ENCODE measurements at regions of chr15 and their contacts with region 1.

Region 1: GRCh38 chr15:89893696-89894455 is at the start of gene AP3S2:
- DNase-seq: peak; percentile 96
- H3K4me3 Mint-ChIP-seq: peak within 1 kb of the TSS; percentile 99
- H3K27ac Mint-ChIP-seq: peak within 1 kb of the TSS; percentile 98
- H3K4me1 Mint-ChIP-seq: peaks cover 8% of the 10 kb centered on the region
- H3K27me3 Mint-ChIP-seq: no peaks in the 10 kb centered on the region
- CTCF ChIP-seq: no peak
- total RNA-seq, gene AP3S2: 46.2 and 51.9 TPM in 2 replicates

Region 2: GRCh38 chr15:89485855-89486361 is 408.0 kb before region 1 on chr15:
- CTCF ChIA-PET with region 1: no interaction called
- intact Hi-C with region 1: no loop called
- DNase-seq: peak; percentile 60
- H3K4me3 Mint-ChIP-seq: peak overlapping the region; percentile 55
- H3K27ac Mint-ChIP-seq: peak overlapping the region; percentile 27
- H3K4me1 Mint-ChIP-seq: peaks cover 17% of the 10 kb centered on the region
- H3K27me3 Mint-ChIP-seq: peaks cover 57% of the 10 kb centered on the region
- CTCF ChIP-seq: no peak

Region 3: DNA sequence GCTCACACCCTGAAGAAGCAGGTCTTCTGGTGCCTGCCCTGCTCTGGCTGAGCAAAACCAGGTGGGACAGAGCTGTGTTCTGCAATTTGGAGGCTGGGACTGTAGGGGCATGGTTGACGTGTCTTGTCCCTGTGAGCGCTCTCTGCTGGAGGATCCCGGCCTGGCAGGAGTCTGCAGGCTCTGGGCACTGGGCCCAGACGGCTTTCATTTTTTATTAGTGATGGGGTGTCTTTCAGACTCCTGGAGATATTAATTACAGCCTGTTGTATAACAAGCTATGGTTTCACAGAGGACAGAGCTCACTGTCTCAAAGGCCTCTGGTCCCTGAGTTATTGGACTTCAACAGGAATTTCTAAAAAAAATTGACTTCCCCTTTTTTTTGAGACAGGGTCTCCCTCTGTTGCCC is 77.7 kb after region 1 on chr15:
- CTCF ChIA-PET with region 1: interaction called, 10 read pairs
- intact Hi-C with region 1: loop called (anchors 1 kb)
- DNase-seq: peak; percentile 82
- H3K4me3 Mint-ChIP-seq: no peak overlapping the region
- H3K27ac Mint-ChIP-seq: no peak overlapping the region
- H3K4me1 Mint-ChIP-seq: no peaks in the 10 kb centered on the region
- H3K27me3 Mint-ChIP-seq: peaks cover 43% of the 10 kb centered on the region
- CTCF ChIP-seq: peak; percentile 66

Region 4: DNA sequence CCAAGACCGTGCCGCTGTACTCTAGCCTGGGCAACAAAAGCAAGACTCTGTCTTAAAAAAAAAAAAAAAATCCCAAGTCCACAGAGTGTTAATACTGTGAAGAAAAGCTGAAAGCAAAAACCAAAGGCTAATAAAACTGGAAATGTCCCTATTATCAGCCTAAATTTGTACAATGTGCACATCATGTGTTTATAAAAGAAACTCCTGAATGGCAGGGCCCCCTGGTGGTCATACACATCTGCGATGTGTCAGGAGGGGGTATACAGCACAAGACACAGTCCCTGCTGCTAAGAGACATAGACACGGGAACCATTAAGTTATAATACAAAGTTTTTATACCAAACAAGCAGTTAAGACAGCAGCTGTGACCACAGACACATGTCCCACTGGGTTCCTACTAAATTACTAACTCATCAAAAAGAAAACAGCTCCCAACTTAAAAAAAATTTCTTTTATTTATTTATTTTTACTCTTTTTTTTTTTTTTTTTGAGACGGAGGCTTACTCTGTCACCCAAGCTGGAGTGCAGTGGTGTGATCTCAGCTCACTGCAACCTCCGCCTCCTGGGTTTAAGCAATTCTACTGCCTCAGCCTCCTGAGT is 177.4 kb after region 1 on chr15:
- CTCF ChIA-PET with region 1: interaction called, 13 read pairs
- intact Hi-C with region 1: loop called (anchors 1 kb)
- DNase-seq: peak; percentile 86
- H3K4me3 Mint-ChIP-seq: no peak overlapping the region
- H3K27ac Mint-ChIP-seq: no peak overlapping the region
- H3K4me1 Mint-ChIP-seq: no peaks in the 10 kb centered on the region
- H3K27me3 Mint-ChIP-seq: no peaks in the 10 kb centered on the region
- CTCF ChIP-seq: peak; percentile 77

Region 5: DNA sequence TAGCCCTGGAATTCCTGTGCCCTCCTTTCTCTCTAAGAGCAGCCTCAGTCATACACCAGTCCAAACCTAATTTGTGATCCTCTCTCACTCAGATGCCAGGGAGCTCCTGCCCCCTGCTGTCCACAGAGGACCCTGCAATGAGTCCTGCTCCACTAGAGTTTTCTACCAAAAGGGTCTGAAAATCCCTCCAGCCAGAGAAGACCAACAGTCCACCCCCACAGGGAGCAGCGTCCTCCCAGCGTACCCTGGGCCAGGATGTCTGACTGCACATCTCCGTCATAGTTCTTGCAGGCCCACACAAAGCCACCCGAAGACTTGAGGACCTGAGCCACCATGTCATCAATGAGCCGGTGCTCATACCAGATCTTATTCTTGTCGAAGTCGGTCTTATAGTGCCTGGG is 193.0 kb after region 1 on chr15:
- CTCF ChIA-PET with region 1: interaction called, 17 read pairs
- intact Hi-C with region 1: loop called (anchors 1 kb)
- DNase-seq: peak; percentile 72
- H3K4me3 Mint-ChIP-seq: no peak overlapping the region
- H3K27ac Mint-ChIP-seq: no peak overlapping the region
- H3K4me1 Mint-ChIP-seq: no peaks in the 10 kb centered on the region
- H3K27me3 Mint-ChIP-seq: no peaks in the 10 kb centered on the region
- CTCF ChIP-seq: peak; percentile 74

Region 6: GRCh38 chr15:90286678-90287077 is 392.8 kb after region 1 on chr15:
- CTCF ChIA-PET with region 1: no interaction called
- intact Hi-C with region 1: no loop called
- DNase-seq: peak; percentile 30
- H3K4me3 Mint-ChIP-seq: no peak overlapping the region
- H3K27ac Mint-ChIP-seq: no peak overlapping the region
- H3K4me1 Mint-ChIP-seq: no peaks in the 10 kb centered on the region
- H3K27me3 Mint-ChIP-seq: no peaks in the 10 kb centered on the region
- CTCF ChIP-seq: peak; percentile 24